ENCODE measurements at regions of chr16 and their contacts with region 1.

Region 1: GRCh38 chr16:17404941-17405689 is 65.6 kb downstream of the XYLT1 start:
- DNase-seq: peak in 1 of 2 donors; percentile 92
- H3K4me3 ChIP-seq: no peak overlapping the region
- H3K27ac ChIP-seq: peak overlapping the region; percentile 87
- H3K4me1 ChIP-seq: peaks cover 51% of the 10 kb centered on the region
- H3K27me3 ChIP-seq: no peaks in the 10 kb centered on the region
- CTCF ChIP-seq: no peak
- POLR2A ChIP-seq: no peak

Region 2: GRCh38 chr16:17296431-17296830 is 108.7 kb before region 1 on chr16:
- intact Hi-C with region 1: loop called (anchors 10 kb)
- DNase-seq: no peak
- H3K4me3 ChIP-seq: no peak overlapping the region
- H3K27ac ChIP-seq: no peak overlapping the region
- H3K4me1 ChIP-seq: peaks cover 17% of the 10 kb centered on the region
- H3K27me3 ChIP-seq: no peaks in the 10 kb centered on the region
- CTCF ChIP-seq: no peak
- POLR2A ChIP-seq: no peak

Region 3: DNA sequence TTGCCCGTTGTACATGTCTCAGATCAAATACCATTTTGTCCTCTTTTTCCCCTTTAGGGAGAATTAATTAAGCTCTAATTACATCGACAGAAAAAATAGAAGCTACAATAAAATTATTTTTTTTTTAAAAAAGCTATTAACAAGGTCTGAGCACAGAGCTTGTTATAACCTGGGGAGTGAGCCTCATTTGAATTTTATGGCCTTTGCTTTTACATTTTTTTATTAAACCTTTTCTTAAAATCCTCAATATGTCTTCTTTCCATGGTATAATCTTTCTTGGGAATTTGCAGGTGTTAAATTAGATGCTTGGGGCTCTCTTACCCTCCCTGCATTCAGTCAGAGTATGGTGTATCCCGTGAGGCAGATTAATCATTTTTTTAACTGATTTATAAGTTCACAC is 278.2 kb after region 1 on chr16:
- intact Hi-C with region 1: no loop called
- DNase-seq: no peak
- H3K4me3 ChIP-seq: no peak overlapping the region
- H3K27ac ChIP-seq: no peak overlapping the region
- H3K4me1 ChIP-seq: no peaks in the 10 kb centered on the region
- H3K27me3 ChIP-seq: no peaks in the 10 kb centered on the region
- CTCF ChIP-seq: no peak
- POLR2A ChIP-seq: no peak

Measured in vagina (tissue), 2 donors.